Activated T-helper 1 cell treated with anti-CD3 and anti-CD28 coated beads, Interleukin-12 subunit alpha, Interleukin-12 subunit beta, Interleukin-2, Interleukin-4 antibody, amounts not matched to agents 30 ng/mL and 10 ng/mL and 1 ng/mL, durations not matched to agents 14 hours and 24 hours and 36 hours (primary cell): ENCODE measurements at regions of chr16 and their contacts with region 1.

Region 1: GRCh38 chr16:87305505-87306391 is 11.4 kb downstream of the C16orf95 start:
- DNase-seq: no peak
- H3K4me3 Mint-ChIP-seq: no peak overlapping the region
- H3K27ac Mint-ChIP-seq: no peak overlapping the region
- H3K4me1 Mint-ChIP-seq: peaks cover 34% of the 10 kb centered on the region
- H3K27me3 Mint-ChIP-seq: no peaks in the 10 kb centered on the region

Region 2: GRCh38 chr16:87435372-87436224 is 129.8 kb after region 1 on chr16:
- intact Hi-C with region 1: no loop called
- DNase-seq: no peak
- H3K4me3 Mint-ChIP-seq: no peak overlapping the region
- H3K27ac Mint-ChIP-seq: no peak overlapping the region
- H3K4me1 Mint-ChIP-seq: peaks cover 14% of the 10 kb centered on the region
- H3K27me3 Mint-ChIP-seq: peaks cover 17% of the 10 kb centered on the region

Region 3: GRCh38 chr16:87487361-87488001 is 181.7 kb after region 1 on chr16:
- intact Hi-C with region 1: loop called (anchors 5 kb)
- DNase-seq: no peak
- H3K4me3 Mint-ChIP-seq: no peak overlapping the region
- H3K27ac Mint-ChIP-seq: no peak overlapping the region
- H3K4me1 Mint-ChIP-seq: peaks cover 48% of the 10 kb centered on the region
- H3K27me3 Mint-ChIP-seq: peaks cover 19% of the 10 kb centered on the region